WTC11 (cell line): ENCODE measurements at regions of chr22 and their contacts with region 1.

Region 1: DNA sequence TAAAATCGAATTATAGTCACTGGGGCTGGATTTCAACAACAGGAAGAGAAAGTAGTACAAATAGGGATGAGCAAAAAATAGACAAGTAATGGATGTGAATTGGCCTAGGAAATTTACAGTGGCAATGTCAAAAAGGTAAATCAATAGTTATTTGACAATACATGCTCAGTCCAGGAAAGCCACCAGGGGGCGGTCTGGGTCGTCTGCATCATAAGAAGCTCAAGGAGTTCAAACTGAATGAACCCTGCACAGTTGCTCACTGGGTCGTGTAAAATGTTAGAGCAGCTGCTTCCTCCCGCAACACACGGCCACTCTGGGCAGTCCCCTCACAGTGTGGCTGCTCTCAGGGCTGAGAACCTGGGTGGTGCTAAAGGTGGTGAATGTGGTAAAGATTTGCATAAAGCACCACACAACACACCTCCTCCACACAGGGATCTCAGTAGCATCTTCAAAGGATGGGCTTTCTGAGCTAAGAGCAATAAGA is 85.9 kb downstream of the ZNF280B start:
- DNase-seq: peak; percentile 82
- ATAC-seq: peak; percentile 75
- H3K4me3 Mint-ChIP-seq: no peak overlapping the region
- H3K27ac Mint-ChIP-seq: no peak overlapping the region
- H3K4me1 Mint-ChIP-seq: peaks cover 16% of the 10 kb centered on the region
- H3K27me3 Mint-ChIP-seq: peaks cover 98% of the 10 kb centered on the region
- CTCF ChIP-seq: peak; percentile 52

Region 2: GRCh38 chr22:22387386-22387736 is 35.3 kb before region 1 on chr22:
- CTCF ChIA-PET with region 1: no interaction called
- POLR2A ChIA-PET with region 1: no interaction called
- DNase-seq: no peak
- ATAC-seq: no peak
- H3K4me3 Mint-ChIP-seq: no peak overlapping the region
- H3K27ac Mint-ChIP-seq: no peak overlapping the region
- H3K4me1 Mint-ChIP-seq: no peaks in the 10 kb centered on the region
- H3K27me3 Mint-ChIP-seq: peaks cover 100% of the 10 kb centered on the region
- CTCF ChIP-seq: no peak

Region 3: DNA sequence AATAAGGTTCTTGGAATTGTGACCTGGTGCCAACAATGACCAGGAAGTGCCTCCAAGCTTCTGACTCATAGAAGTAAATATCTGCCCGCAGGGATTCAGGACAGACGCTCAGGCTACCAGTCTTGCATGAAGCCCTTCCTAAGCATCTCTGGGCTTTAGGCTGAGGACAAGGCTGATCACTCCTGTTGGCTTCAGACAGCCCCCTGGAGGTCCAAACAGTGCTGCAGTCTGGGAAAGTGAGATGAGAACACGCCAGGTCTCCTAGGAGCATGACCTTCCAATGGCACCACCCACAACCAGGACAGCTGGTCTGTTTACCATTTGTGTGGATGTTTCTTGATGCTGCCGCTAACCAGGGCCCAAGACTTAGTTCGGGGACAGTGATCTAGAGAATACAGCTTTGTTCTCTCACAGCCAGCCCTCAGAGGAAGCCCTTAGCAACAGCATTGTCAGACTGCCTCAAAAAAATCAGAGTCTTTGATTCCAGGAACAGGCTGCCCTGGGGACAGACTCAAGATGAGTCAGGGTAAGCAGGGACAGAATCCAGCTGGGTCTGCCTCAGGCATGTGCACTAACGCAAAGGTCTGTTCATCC is 25.3 kb before region 1 on chr22:
- CTCF ChIA-PET with region 1: interaction called, 12 read pairs
- POLR2A ChIA-PET with region 1: no interaction called
- DNase-seq: no peak
- ATAC-seq: peak; percentile 83
- H3K4me3 Mint-ChIP-seq: no peak overlapping the region
- H3K27ac Mint-ChIP-seq: no peak overlapping the region
- H3K4me1 Mint-ChIP-seq: no peaks in the 10 kb centered on the region
- H3K27me3 Mint-ChIP-seq: peaks cover 100% of the 10 kb centered on the region
- CTCF ChIP-seq: no peak

Region 4: GRCh38 chr22:22403771-22404170 is 18.9 kb before region 1 on chr22:
- CTCF ChIA-PET with region 1: interaction called, 15 read pairs
- POLR2A ChIA-PET with region 1: no interaction called
- DNase-seq: no peak
- ATAC-seq: peak; percentile 68
- H3K4me3 Mint-ChIP-seq: no peak overlapping the region
- H3K27ac Mint-ChIP-seq: no peak overlapping the region
- H3K4me1 Mint-ChIP-seq: no peaks in the 10 kb centered on the region
- H3K27me3 Mint-ChIP-seq: peaks cover 100% of the 10 kb centered on the region
- CTCF ChIP-seq: no peak

Region 5: DNA sequence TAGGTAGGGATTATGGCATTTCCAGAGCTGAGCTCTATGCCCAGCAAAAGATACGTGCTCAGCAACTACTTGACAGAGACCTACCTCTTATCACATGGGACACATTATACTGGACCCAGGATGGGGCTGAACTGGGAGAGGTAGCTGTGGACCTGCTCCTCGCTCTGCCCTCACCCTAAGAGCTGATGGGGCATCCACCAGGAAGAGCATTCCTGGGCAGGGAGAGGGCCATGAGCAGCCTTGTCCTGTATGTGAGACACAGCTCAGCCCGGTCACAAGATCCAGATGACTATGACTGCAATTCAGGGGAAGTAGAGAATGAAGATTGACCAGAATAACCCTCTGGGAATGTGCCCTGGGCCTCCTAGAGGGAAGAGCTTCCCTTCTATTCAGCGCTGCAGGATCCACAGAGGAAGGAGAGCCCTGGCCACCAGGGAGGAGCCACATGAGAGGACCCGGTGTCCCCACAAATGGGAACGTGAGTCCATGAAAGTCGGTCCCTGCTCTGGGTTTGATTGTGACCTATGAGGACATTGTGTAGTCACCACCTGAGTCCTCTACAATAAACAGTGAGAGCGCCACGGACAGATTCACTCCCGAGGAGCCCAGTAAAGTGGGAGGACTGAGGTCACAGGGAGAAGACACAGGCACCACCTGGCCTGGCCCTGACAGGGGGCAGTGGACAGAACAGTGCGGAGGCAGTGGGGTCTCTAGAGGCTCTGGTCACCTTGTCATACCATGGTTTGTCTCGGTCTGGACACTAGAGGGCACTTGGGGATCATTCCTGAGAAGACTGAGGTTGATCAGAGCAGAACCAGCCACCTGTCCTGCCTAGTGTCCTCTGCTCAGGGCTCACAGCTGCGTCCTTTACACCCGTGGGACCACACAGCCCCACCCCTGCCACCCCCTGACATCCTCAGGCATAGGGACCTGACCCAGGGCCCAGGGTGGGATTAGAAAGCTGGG is 13.7 kb before region 1 on chr22:
- CTCF ChIA-PET with region 1: interaction called, 21 read pairs
- POLR2A ChIA-PET with region 1: no interaction called
- DNase-seq: peak; percentile 51
- ATAC-seq: peak; percentile 89
- H3K4me3 Mint-ChIP-seq: no peak overlapping the region
- H3K27ac Mint-ChIP-seq: no peak overlapping the region
- H3K4me1 Mint-ChIP-seq: no peaks in the 10 kb centered on the region
- H3K27me3 Mint-ChIP-seq: peaks cover 100% of the 10 kb centered on the region
- CTCF ChIP-seq: peak; percentile 32